Posterior vena cava (tissue), 2 donors: ENCODE measurements at regions of chr7 and their contacts with region 1.

Region 1: DNA sequence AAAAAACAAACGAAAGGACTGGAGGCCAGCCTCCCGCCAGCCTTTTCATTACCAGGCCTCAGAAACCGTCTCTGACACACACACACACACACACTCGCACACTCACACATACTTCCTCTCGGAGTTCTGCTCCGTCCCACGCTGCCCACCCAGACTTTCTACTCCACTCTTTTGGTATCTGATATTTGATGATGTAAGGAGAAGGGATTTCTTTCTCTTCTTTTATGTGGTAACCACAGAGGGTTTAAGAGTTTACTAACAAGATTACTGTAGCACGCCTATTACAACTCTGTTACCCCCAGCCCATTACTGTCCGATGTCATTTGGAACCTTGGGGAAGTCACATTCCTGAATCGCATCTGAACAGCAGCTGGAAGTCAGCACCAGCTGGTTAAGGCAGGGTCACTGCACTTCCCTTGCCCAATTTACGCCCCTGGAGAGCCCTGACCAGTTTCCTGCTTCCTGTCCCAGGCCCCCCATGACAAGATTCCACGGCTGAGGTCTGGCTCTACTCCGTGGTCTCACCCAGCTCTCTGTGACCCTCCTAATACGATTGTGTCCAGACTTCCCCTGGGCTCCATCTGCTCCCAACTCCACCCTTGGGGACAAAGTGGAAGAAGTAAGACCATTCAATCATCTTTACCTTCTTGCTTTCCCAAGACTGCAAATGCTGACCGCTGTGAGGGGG is 1.1 kb downstream of the DENND2A start:
- DNase-seq: no peak

Region 2: DNA sequence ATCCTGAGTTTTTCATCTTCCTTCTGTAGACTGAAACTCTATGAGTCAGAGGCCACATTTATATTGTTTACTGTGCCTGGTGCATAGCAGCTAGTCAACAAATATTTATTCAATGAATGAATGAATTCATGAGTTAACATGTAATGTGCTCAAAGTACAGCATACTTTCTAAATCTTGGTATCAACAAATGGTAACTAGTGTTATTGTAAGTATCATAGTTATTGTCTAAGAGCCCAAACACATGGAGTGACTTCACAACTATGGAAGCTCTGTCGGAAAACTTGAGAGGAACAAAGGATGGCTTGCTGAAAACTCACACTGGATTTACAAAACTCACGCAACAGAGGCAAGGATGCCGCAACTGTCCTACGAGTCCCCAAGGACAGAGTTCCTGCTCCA is 34.8 kb before region 1 on chr7:
- intact Hi-C with region 1: loop called in 1 of 2 experiments (anchors 5 kb)
- DNase-seq: no peak